Panc1 (cell line): ENCODE measurements at regions of chr2 and their contacts with region 1.

Region 1: GRCh38 chr2:85813982-85814801 is 60.4 kb downstream of the ATOH8 start:
- DNase-seq: peak; percentile 63
- ATAC-seq: peak; percentile 99
- H3K4me3 ChIP-seq: no peak overlapping the region
- H3K27ac ChIP-seq: no peak overlapping the region
- H3K4me1 ChIP-seq: no peaks in the 10 kb centered on the region
- H3K27me3 ChIP-seq: no peaks in the 10 kb centered on the region
- CTCF ChIP-seq: peak; percentile 95

Region 2: DNA sequence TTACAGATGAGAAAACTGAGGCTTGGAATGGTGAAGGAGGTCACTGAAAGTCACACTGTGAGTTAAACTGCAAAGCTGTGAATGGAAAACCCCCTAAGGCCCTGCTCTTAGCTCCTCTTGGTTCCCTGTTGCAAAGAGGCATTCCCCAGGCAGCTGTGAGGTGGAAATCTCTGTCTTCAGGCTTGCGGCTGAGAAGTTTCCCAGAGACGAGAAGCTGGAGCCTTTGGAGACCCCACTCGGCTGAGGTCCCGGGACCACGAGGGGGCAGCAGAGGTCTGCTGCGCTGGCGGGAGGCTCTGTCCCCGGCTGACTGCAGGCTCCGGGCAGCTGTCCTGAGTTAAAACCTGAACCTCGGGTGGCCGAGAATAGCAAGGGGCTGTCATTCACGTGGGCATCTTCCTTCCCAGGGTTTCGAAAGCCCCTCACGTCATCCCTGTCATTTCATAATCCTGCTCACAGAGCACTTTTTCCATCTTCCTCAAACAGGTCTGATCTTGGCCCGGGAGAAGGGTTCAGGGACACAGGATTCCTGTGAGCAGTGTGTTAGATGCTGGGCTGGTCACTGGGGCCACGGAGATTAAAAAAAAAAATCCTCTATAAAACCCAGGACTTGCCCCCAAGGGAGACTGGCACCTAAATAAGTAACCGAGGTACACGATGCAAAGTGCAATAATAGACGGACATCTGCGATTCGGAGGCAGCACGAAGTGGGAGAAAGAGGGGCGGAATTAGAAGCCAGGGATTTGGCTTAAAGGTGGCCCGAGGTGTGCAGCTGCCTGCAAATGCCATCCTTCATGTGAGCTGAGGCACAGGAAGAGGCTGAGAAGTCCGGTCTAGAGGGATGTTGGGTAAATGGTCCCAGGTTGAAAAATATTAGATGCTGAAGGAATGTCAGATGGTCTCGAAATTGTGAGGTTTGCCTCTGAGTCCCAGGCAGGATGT is 85.0 kb before region 1 on chr2:
- CTCF ChIA-PET with region 1: interaction called, 18 read pairs
- POLR2A ChIA-PET with region 1: no interaction called
- in situ Hi-C with region 1: no loop called
- intact Hi-C with region 1: loop called (anchors 1 kb)
- DNase-seq: no peak
- ATAC-seq: peak; percentile 99
- H3K4me3 ChIP-seq: no peak overlapping the region
- H3K27ac ChIP-seq: no peak overlapping the region
- H3K4me1 ChIP-seq: peaks cover 12% of the 10 kb centered on the region
- H3K27me3 ChIP-seq: no peaks in the 10 kb centered on the region
- CTCF ChIP-seq: peak; percentile 99